ENCODE measurements at regions of chr5 and their contacts with region 1.

Region 1: GRCh38 chr5:23139338-23140171 is 286.4 kb upstream of the CDH12 start:
- DNase-seq: peak in 1 of 2 experiments; percentile 10
- H3K4me3 ChIP-seq: no peak overlapping the region
- H3K4me3 Mint-ChIP-seq: no peak overlapping the region
- H3K27ac Mint-ChIP-seq: no peak overlapping the region
- H3K4me1 ChIP-seq: no peaks in the 10 kb centered on the region
- H3K4me1 Mint-ChIP-seq: no peaks in the 10 kb centered on the region
- H3K27me3 ChIP-seq: no peaks in the 10 kb centered on the region
- H3K27me3 Mint-ChIP-seq: no peaks in the 10 kb centered on the region
- CTCF ChIP-seq: peak; percentile 30 to 34

Region 2: GRCh38 chr5:22242537-22242936 is 897.0 kb before region 1 on chr5:
- CTCF ChIA-PET with region 1: no interaction called
- POLR2A ChIA-PET with region 1: no interaction called
- intact Hi-C with region 1: loop called (anchors 5 kb)
- DNase-seq: peak; percentile 19 to 31
- H3K4me3 ChIP-seq: no peak overlapping the region
- H3K4me3 Mint-ChIP-seq: no peak overlapping the region
- H3K27ac Mint-ChIP-seq: no peak overlapping the region
- H3K4me1 ChIP-seq: no peaks in the 10 kb centered on the region
- H3K4me1 Mint-ChIP-seq: no peaks in the 10 kb centered on the region
- H3K27me3 ChIP-seq: no peaks in the 10 kb centered on the region
- H3K27me3 Mint-ChIP-seq: peaks cover 5% of the 10 kb centered on the region
- CTCF ChIP-seq: peak in 1 of 2 experiments; percentile 43

Region 3: DNA sequence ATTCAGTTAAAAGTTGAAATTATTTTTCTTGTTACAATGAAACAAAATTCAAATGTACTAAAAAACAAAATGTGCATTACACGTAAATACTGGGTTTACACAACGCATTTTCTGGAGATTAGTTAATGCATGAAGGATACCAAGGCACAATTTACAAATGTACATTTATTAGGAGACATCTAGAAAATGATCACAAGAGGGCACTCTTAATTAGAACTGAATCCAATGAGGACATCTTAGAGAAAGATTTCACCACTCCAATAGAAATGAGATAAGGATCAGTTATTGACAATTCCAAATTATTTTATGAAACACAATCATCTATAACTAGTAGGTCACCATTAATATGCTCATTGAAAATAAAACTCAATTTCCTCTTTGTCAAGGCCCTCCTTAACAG is 249.8 kb before region 1 on chr5:
- CTCF ChIA-PET with region 1: no interaction called
- POLR2A ChIA-PET with region 1: no interaction called
- intact Hi-C with region 1: loop called (anchors 1 kb)
- DNase-seq: no peak
- H3K4me3 ChIP-seq: no peak overlapping the region
- H3K4me3 Mint-ChIP-seq: no peak overlapping the region
- H3K27ac Mint-ChIP-seq: no peak overlapping the region
- H3K4me1 ChIP-seq: no peaks in the 10 kb centered on the region
- H3K4me1 Mint-ChIP-seq: no peaks in the 10 kb centered on the region
- H3K27me3 ChIP-seq: no peaks in the 10 kb centered on the region
- H3K27me3 Mint-ChIP-seq: peaks cover 5% of the 10 kb centered on the region
- CTCF ChIP-seq: no peak

Region 4: DNA sequence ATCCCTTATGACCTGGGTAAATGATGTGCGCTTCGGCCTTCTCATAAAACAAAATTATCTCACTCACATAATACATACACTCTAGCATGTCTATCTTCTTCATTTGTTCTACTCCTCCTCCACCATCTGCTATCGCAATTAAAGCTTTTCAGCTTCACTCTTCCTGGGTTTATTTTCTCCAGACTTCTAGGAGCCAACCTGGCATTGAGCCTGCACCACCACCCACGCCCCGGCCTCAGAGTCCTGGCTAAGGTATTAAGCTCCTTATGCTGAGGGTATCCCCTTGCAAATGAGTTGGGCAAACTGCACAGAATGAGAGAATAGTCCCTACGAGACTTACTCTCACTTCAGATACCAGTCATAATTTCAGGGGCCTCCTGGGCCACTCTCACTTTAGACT is 50.3 kb before region 1 on chr5:
- CTCF ChIA-PET with region 1: no interaction called
- POLR2A ChIA-PET with region 1: no interaction called
- intact Hi-C with region 1: no loop called
- DNase-seq: no peak
- H3K4me3 ChIP-seq: no peak overlapping the region
- H3K4me3 Mint-ChIP-seq: no peak overlapping the region
- H3K27ac Mint-ChIP-seq: no peak overlapping the region
- H3K4me1 ChIP-seq: no peaks in the 10 kb centered on the region
- H3K4me1 Mint-ChIP-seq: no peaks in the 10 kb centered on the region
- H3K27me3 ChIP-seq: no peaks in the 10 kb centered on the region
- H3K27me3 Mint-ChIP-seq: no peaks in the 10 kb centered on the region
- CTCF ChIP-seq: no peak

Region 5: GRCh38 chr5:24525421-24525820 is 1385.9 kb after region 1 on chr5:
- CTCF ChIA-PET with region 1: no interaction called
- POLR2A ChIA-PET with region 1: no interaction called
- intact Hi-C with region 1: no loop called
- DNase-seq: no peak
- H3K4me3 ChIP-seq: no peak overlapping the region
- H3K4me3 Mint-ChIP-seq: no peak overlapping the region
- H3K27ac Mint-ChIP-seq: no peak overlapping the region
- H3K4me1 ChIP-seq: no peaks in the 10 kb centered on the region
- H3K4me1 Mint-ChIP-seq: no peaks in the 10 kb centered on the region
- H3K27me3 ChIP-seq: no peaks in the 10 kb centered on the region
- H3K27me3 Mint-ChIP-seq: peaks cover 3% of the 10 kb centered on the region
- CTCF ChIP-seq: no peak

Measured in Caco-2 (cell line).